ENCODE measurements at regions of chr5 and their contacts with region 1.

Region 1: GRCh38 chr5:134225618-134226440 is at the start of gene PPP2CA:
- DNase-seq: peak; percentile 99
- H3K4me3 Mint-ChIP-seq: peak within 1 kb of the TSS; percentile 93
- H3K27ac Mint-ChIP-seq: peak within 1 kb of the TSS; percentile 94
- H3K4me1 Mint-ChIP-seq: peaks cover 37% of the 10 kb centered on the region
- H3K27me3 Mint-ChIP-seq: no peaks in the 10 kb centered on the region
- CTCF ChIP-seq: peak; percentile 21
- total RNA-seq, gene PPP2CA: 242 and 260 TPM in 2 replicates

Region 2: GRCh38 chr5:134184155-134185135 is 41.4 kb before region 1 on chr5:
- CTCF ChIA-PET with region 1: no interaction called
- intact Hi-C with region 1: loop called (anchors 5 kb)
- DNase-seq: peak; percentile 87
- H3K4me3 Mint-ChIP-seq: no peak overlapping the region
- H3K27ac Mint-ChIP-seq: no peak overlapping the region
- H3K4me1 Mint-ChIP-seq: peaks cover 22% of the 10 kb centered on the region
- H3K27me3 Mint-ChIP-seq: no peaks in the 10 kb centered on the region
- CTCF ChIP-seq: peak; percentile 95

Region 3: GRCh38 chr5:134245101-134245604 is 19.3 kb after region 1 on chr5:
- CTCF ChIA-PET with region 1: interaction called, 18 read pairs
- intact Hi-C with region 1: loop called (anchors 2 kb)
- DNase-seq: peak; percentile 72
- H3K4me3 Mint-ChIP-seq: peak overlapping the region; percentile 43
- H3K27ac Mint-ChIP-seq: peak overlapping the region; percentile 77
- H3K4me1 Mint-ChIP-seq: peaks cover 54% of the 10 kb centered on the region
- H3K27me3 Mint-ChIP-seq: no peaks in the 10 kb centered on the region
- CTCF ChIP-seq: no peak

Region 4: GRCh38 chr5:134281081-134281480 is 55.3 kb after region 1 on chr5:
- CTCF ChIA-PET with region 1: interaction called, 6 read pairs
- intact Hi-C with region 1: loop called (anchors 2 kb)
- DNase-seq: no peak
- H3K4me3 Mint-ChIP-seq: no peak overlapping the region
- H3K27ac Mint-ChIP-seq: peak overlapping the region; percentile 14
- H3K4me1 Mint-ChIP-seq: peaks cover 35% of the 10 kb centered on the region
- H3K27me3 Mint-ChIP-seq: no peaks in the 10 kb centered on the region
- CTCF ChIP-seq: no peak

Measured in Calu3 (cell line).